ENCODE measurements at regions of chr12 and their contacts with region 1.

Region 1: GRCh38 chr12:111482462-111482861 is 76.7 kb downstream of the SH2B3 start:
- DNase-seq: no peak
- ATAC-seq: no peak
- H3K4me3 Mint-ChIP-seq: no peak overlapping the region
- H3K27ac Mint-ChIP-seq: no peak overlapping the region
- H3K4me1 Mint-ChIP-seq: no peaks in the 10 kb centered on the region
- H3K27me3 Mint-ChIP-seq: no peaks in the 10 kb centered on the region

Region 2: GRCh38 chr12:111519083-111519482 is 36.6 kb after region 1 on chr12:
- CTCF ChIA-PET with region 1: no interaction called
- POLR2A ChIA-PET with region 1: no interaction called
- intact Hi-C with region 1: loop called in 1 of 2 experiments (anchors 1 kb)
- DNase-seq: no peak
- ATAC-seq: no peak
- H3K4me3 Mint-ChIP-seq: no peak overlapping the region
- H3K27ac Mint-ChIP-seq: no peak overlapping the region
- H3K4me1 Mint-ChIP-seq: peaks cover 3% of the 10 kb centered on the region
- H3K27me3 Mint-ChIP-seq: no peaks in the 10 kb centered on the region

Measured in activated CD4-positive, alpha-beta T cell treated with anti-CD3 and anti-CD28 coated beads for 36 hours (primary cell).